Activated T-helper 1 cell treated with anti-CD3 and anti-CD28 coated beads, Interleukin-12 subunit alpha, Interleukin-12 subunit beta, Interleukin-2, Interleukin-4 antibody, amounts not matched to agents 30 ng/mL and 10 ng/mL and 1 ng/mL, durations not matched to agents 14 hours and 24 hours and 36 hours (primary cell): ENCODE measurements at regions of chr2 and their contacts with region 1.

Region 1: DNA sequence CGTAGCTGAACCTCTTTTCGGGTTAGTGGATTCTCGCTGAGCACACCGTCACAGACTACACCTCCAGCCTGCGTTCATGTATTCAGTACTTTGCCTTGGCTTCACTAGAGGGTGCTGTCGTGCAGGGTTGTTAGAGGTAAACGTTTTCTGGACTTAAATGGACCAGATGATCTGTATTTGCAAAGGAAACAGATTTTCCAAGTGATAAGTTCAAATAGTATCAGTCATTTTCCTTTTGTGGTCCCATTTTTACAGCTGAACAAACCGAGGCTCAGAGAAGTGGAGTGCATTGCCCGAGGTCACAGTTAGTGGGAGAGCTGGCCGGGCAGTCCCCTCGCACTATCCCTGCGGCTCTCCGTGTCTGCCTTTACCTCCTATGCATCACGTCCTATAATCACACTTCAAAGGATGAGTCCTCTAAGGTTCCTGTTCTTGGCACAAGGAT is 125.9 kb downstream of the MAP4K4 start:
- DNase-seq: peak; percentile 63
- H3K4me3 Mint-ChIP-seq: peak overlapping the region; percentile 32
- H3K27ac Mint-ChIP-seq: peak overlapping the region; percentile 30
- H3K4me1 Mint-ChIP-seq: peaks cover 75% of the 10 kb centered on the region
- H3K27me3 Mint-ChIP-seq: no peaks in the 10 kb centered on the region

Region 2: GRCh38 chr2:101410716-101411211 is 412.6 kb before region 1 on chr2:
- intact Hi-C with region 1: no loop called
- DNase-seq: no peak
- H3K4me3 Mint-ChIP-seq: no peak overlapping the region
- H3K27ac Mint-ChIP-seq: no peak overlapping the region
- H3K4me1 Mint-ChIP-seq: no peaks in the 10 kb centered on the region
- H3K27me3 Mint-ChIP-seq: peaks cover 6% of the 10 kb centered on the region

Region 3: DNA sequence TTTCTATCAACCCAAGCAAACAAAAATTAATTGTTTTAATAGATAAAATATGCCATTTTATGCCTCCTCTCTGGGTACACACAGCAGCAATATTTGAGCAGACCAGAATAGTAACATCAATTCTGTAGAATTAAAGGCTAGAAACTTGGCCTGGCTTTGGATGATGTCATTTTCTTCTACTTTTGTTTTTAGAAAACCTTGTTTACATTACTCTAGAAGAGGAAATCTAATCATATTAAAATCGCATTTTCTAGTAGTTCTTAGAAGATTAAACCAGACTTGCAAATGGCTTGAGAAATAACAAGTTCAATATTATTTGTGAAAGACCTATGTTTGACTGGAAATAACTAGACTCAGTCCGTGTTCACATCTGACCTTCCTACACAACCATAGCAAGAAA is 246.2 kb before region 1 on chr2:
- intact Hi-C with region 1: loop called (anchors 5 kb)
- DNase-seq: no peak
- H3K4me3 Mint-ChIP-seq: no peak overlapping the region
- H3K27ac Mint-ChIP-seq: no peak overlapping the region
- H3K4me1 Mint-ChIP-seq: peaks cover 36% of the 10 kb centered on the region
- H3K27me3 Mint-ChIP-seq: peaks cover 3% of the 10 kb centered on the region

Region 4: GRCh38 chr2:101770726-101771125 is 52.6 kb before region 1 on chr2:
- intact Hi-C with region 1: loop called (anchors 2 kb)
- DNase-seq: no peak
- H3K4me3 Mint-ChIP-seq: no peak overlapping the region
- H3K27ac Mint-ChIP-seq: no peak overlapping the region
- H3K4me1 Mint-ChIP-seq: peaks cover 91% of the 10 kb centered on the region
- H3K27me3 Mint-ChIP-seq: no peaks in the 10 kb centered on the region

Region 5: GRCh38 chr2:101893681-101894381 is 70.5 kb after region 1 on chr2:
- intact Hi-C with region 1: no loop called
- DNase-seq: no peak
- H3K4me3 Mint-ChIP-seq: no peak overlapping the region
- H3K27ac Mint-ChIP-seq: no peak overlapping the region
- H3K4me1 Mint-ChIP-seq: no peaks in the 10 kb centered on the region
- H3K27me3 Mint-ChIP-seq: peaks cover 1% of the 10 kb centered on the region